GM12878 (cell line): ENCODE measurements at regions of chr2 and their contacts with region 1.

Region 1: GRCh38 chr2:46029332-46029811 is 267.8 kb upstream of the EPAS1 start:
- DNase-seq: no peak
- ATAC-seq: no peak
- H3K4me3 ChIP-seq: no peak overlapping the region
- H3K27ac ChIP-seq: no peak overlapping the region
- H3K4me1 ChIP-seq: no peaks in the 10 kb centered on the region
- H3K27me3 ChIP-seq: no peaks in the 10 kb centered on the region
- CTCF ChIP-seq: peak; percentile 4 to 24 (median 21); a peak in 1 of 6 replicates
- EP300 ChIP-seq: no peak
- POLR2A ChIP-seq: no peak
- RAD21 ChIP-seq: no peak

Region 2: GRCh38 chr2:46018773-46019591 is 10.4 kb before region 1 on chr2:
- CTCF ChIA-PET with region 1: interaction called, 11 read pairs
- POLR2A ChIA-PET with region 1: no interaction called
- RAD21 ChIA-PET with region 1: no interaction called
- SMC1A ChIA-PET with region 1: no interaction called
- in situ Hi-C with region 1: no loop called
- intact Hi-C with region 1: no loop called
- DNase-seq: no peak
- ATAC-seq: no peak
- H3K4me3 ChIP-seq: no peak overlapping the region
- H3K27ac ChIP-seq: no peak overlapping the region
- H3K4me1 ChIP-seq: no peaks in the 10 kb centered on the region
- H3K27me3 ChIP-seq: no peaks in the 10 kb centered on the region
- CTCF ChIP-seq: no peak
- EP300 ChIP-seq: no peak
- POLR2A ChIP-seq: no peak
- RAD21 ChIP-seq: no peak